Naive thymus-derived CD4-positive, alpha-beta T cell (primary cell): ENCODE measurements at regions of chr22 and their contacts with region 1.

Region 1: GRCh38 chr22:31661851-31662656 is at the start of gene PISD:
- DNase-seq: peak; percentile 93 to 98 (median 97)
- ATAC-seq: peak; percentile 99
- H3K4me3 ChIP-seq: peak within 1 kb of the TSS; percentile 93
- H3K4me3 Mint-ChIP-seq: peak within 1 kb of the TSS; percentile 90 to 100 (median 98)
- H3K27ac ChIP-seq: peak within 1 kb of the TSS; percentile 78
- H3K27ac Mint-ChIP-seq: peak within 1 kb of the TSS; percentile 90 to 100 (median 95)
- H3K4me1 ChIP-seq: peaks cover 10 to 18% of the 10 kb centered on the region in 2 donors
- H3K4me1 Mint-ChIP-seq: peaks cover 22 to 47% (median 39%) of the 10 kb centered on the region in 7 donors
- H3K27me3 ChIP-seq: no peaks in the 10 kb centered on the region
- H3K27me3 Mint-ChIP-seq: no peaks in the 10 kb centered on the region
- total RNA-seq, gene PISD: 29.7 to 47.8 (median 35.5) TPM

Region 2: GRCh38 chr22:31399211-31400028 is 262.6 kb before region 1 on chr22 and contains the start of gene DRG1:
- CTCF ChIA-PET with region 1: no interaction called
- POLR2A ChIA-PET with region 1: interaction called, 10 read pairs
- intact Hi-C with region 1: no loop called
- DNase-seq: peak; percentile 90 to 98 (median 93)
- ATAC-seq: peak; percentile 99
- H3K4me3 ChIP-seq: peak within 1 kb of the TSS; percentile 88
- H3K4me3 Mint-ChIP-seq: peak within 1 kb of the TSS; percentile 92 to 99 (median 96)
- H3K27ac ChIP-seq: peak within 1 kb of the TSS; percentile 91
- H3K27ac Mint-ChIP-seq: peak within 1 kb of the TSS; percentile 85 to 97 (median 94)
- H3K4me1 ChIP-seq: peaks cover 10 to 15% of the 10 kb centered on the region in 2 donors
- H3K4me1 Mint-ChIP-seq: peaks cover 5 to 35% (median 22%) of the 10 kb centered on the region in 7 donors
- H3K27me3 ChIP-seq: no peaks in the 10 kb centered on the region
- H3K27me3 Mint-ChIP-seq: no peaks in the 10 kb centered on the region
- total RNA-seq, gene DRG1: 53.3 to 109 (median 84.4) TPM

Region 3: DNA sequence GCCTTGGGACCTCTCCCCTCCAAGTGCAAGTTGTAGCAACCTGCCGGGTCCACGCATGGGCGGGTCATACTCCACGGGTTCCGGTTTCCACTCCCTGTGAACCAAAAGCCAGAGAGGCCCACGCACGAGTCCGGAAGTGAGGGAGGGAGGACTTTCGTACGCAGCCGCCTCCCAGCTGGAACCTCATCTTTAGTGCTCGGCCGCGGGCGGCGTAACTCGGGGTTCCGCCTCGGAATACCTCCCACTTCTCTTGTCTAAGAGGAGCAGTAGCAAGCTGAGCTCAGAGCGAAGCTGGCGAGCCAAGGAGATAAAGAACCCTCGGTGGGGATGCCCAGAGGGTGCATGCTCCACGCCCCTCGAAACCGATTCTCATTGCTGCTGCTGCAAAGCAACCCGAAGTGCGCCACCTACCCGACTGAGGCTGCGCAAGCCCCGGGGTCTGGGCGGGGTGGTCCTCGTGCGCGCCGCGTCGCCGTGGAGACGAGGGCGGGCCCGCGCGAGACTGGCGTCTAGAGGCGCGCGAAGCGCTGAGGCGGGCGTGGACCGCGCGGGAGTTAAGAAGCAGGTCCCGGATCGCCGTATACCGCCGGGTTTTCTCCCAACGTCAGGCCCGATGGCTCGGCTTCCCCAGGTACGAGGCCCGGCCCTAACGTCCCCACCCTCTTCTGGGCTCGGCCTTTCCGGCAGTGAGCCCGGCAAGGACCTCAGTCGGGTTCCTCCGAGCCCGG is 165.9 kb before region 1 on chr22 and contains the start of gene SFI1:
- CTCF ChIA-PET with region 1: no interaction called
- POLR2A ChIA-PET with region 1: interaction called, 3 read pairs
- intact Hi-C with region 1: loop called in 1 of 2 experiments (anchors 1 kb)
- DNase-seq: peak; percentile 91 to 98 (median 96)
- ATAC-seq: peak; percentile 93
- H3K4me3 ChIP-seq: peak within 1 kb of the TSS; percentile 83
- H3K4me3 Mint-ChIP-seq: peak within 1 kb of the TSS; percentile 85 to 99 (median 96)
- H3K27ac ChIP-seq: peak within 1 kb of the TSS; percentile 92
- H3K27ac Mint-ChIP-seq: peak within 1 kb of the TSS; percentile 92 to 99 (median 98)
- H3K4me1 ChIP-seq: peaks cover 18 to 20% of the 10 kb centered on the region in 2 donors
- H3K4me1 Mint-ChIP-seq: peaks cover 7 to 50% (median 43%) of the 10 kb centered on the region in 7 donors
- H3K27me3 ChIP-seq: no peaks in the 10 kb centered on the region
- H3K27me3 Mint-ChIP-seq: no peaks in the 10 kb centered on the region
- total RNA-seq, gene SFI1: 196 to 359 (median 343) TPM

Region 4: DNA sequence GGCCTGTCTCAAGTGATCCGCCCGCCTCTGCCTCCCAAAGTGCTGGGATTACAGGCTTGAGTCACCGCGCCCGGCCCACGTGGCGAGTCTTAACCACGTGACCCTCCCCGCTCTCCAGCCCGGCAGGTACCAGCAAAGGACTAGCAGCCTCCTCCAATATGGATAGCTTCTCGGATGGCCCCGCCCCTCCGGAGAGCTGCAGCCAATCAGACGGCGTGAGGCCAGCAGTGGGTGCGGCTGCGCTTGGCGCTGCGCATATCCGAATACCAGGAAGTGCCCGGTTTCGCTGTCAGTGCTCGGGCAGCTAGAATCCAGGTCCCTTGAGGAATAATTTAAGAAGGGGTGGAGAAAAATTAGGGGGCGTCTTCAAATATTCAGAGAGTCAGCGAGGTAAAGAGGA is 14.6 kb after region 1 on chr22:
- CTCF ChIA-PET with region 1: interaction called, 11 read pairs
- POLR2A ChIA-PET with region 1: interaction called, 30 read pairs
- intact Hi-C with region 1: loop called (anchors 1 kb)
- DNase-seq: peak; percentile 83 to 90 (median 88)
- ATAC-seq: peak; percentile 100
- H3K4me3 ChIP-seq: peak overlapping the region; percentile 98
- H3K4me3 Mint-ChIP-seq: peak overlapping the region; percentile 85 to 97 (median 94)
- H3K27ac ChIP-seq: peak overlapping the region; percentile 74
- H3K27ac Mint-ChIP-seq: peak overlapping the region; percentile 91 to 100 (median 98)
- H3K4me1 ChIP-seq: no peaks in the 10 kb centered on the region
- H3K4me1 Mint-ChIP-seq: peaks cover 7 to 14% (median 10%) of the 10 kb centered on the region in 7 donors
- H3K27me3 ChIP-seq: no peaks in the 10 kb centered on the region
- H3K27me3 Mint-ChIP-seq: no peaks in the 10 kb centered on the region

Region 5: GRCh38 chr22:31749636-31750364 is 87.7 kb after region 1 on chr22 and contains the start of gene PRR14L:
- CTCF ChIA-PET with region 1: no interaction called
- POLR2A ChIA-PET with region 1: interaction called, 11 read pairs
- intact Hi-C with region 1: loop called (anchors 1 kb)
- DNase-seq: peak; percentile 94 to 100 (median 98)
- ATAC-seq: peak; percentile 86
- H3K4me3 ChIP-seq: peak within 1 kb of the TSS; percentile 92
- H3K4me3 Mint-ChIP-seq: peak within 1 kb of the TSS; percentile 87 to 97 (median 94)
- H3K27ac ChIP-seq: peak within 1 kb of the TSS; percentile 83
- H3K27ac Mint-ChIP-seq: peak within 1 kb of the TSS; percentile 82 to 98 (median 96)
- H3K4me1 ChIP-seq: peaks cover 31 to 37% of the 10 kb centered on the region in 2 donors
- H3K4me1 Mint-ChIP-seq: peaks cover 36 to 65% (median 59%) of the 10 kb centered on the region in 7 donors
- H3K27me3 ChIP-seq: no peaks in the 10 kb centered on the region
- H3K27me3 Mint-ChIP-seq: peaks cover 0 to 2% (median 0%) of the 10 kb centered on the region in 5 donors
- total RNA-seq, gene PRR14L: 43.1 to 82.6 (median 66.9) TPM

Region 6: DNA sequence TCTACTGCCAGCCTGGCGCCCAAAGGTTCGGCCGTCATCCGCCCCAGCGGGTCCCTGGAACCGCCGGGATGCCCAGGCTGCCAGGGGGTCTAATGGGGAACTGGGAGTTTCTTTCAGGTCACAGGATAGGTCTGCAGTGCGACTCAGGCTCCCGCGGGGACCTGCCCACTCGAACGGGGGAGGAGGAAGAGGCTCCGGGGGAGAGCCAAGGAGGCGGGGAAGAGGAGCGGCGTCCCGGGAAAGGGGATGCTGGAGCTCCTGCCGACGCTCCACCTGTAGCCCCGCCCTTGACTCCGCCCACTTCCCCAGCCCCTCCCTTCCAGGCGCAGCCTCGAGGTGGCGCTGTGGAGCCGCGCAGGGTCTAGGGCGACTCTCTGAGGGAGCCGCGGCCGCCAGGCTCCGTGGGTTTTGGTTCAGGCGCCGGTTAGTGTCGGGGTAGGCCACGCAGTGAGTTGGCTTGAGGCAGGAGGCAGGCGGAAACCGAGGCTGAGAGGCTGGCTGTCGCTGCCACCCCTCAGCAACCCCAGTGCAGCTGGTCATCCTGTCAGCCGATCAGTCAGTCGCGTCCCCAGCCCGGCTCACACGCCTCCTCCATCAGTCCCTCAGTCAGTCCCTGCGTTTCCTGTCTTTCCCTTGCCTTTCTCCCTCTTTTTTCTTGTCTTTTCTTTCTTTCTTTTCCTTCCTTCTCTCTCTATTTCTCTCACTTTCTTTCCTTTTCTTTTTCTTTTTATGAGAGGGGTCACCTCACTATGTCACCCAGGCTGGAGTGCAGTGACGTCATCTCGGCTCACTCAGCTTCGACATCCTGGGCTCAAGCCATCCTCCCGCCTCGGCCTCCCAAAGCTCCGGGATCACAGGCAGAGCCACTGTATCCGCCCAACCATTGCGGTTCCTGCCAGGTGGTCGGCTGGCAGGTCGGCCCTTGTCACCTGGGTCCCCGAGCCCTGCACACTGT is 308.7 kb after region 1 on chr22:
- CTCF ChIA-PET with region 1: interaction called, 9 read pairs
- POLR2A ChIA-PET with region 1: no interaction called
- intact Hi-C with region 1: loop called (anchors 1 to 10 kb)
- DNase-seq: peak; percentile 69 to 97 (median 86)
- ATAC-seq: peak; percentile 99
- H3K4me3 ChIP-seq: peak overlapping the region; percentile 70
- H3K4me3 Mint-ChIP-seq: peak overlapping the region; percentile 72 to 87 (median 82)
- H3K27ac ChIP-seq: peak overlapping the region; percentile 37
- H3K27ac Mint-ChIP-seq: peak overlapping the region in 7 of 9 donors; percentile 19 to 75 (median 62)
- H3K4me1 ChIP-seq: peaks cover 8 to 10% of the 10 kb centered on the region in 2 donors
- H3K4me1 Mint-ChIP-seq: peaks cover 9 to 18% (median 13%) of the 10 kb centered on the region in 7 donors
- H3K27me3 ChIP-seq: no peaks in the 10 kb centered on the region
- H3K27me3 Mint-ChIP-seq: peaks cover 0 to 2% (median 0%) of the 10 kb centered on the region in 5 donors

Region 7: DNA sequence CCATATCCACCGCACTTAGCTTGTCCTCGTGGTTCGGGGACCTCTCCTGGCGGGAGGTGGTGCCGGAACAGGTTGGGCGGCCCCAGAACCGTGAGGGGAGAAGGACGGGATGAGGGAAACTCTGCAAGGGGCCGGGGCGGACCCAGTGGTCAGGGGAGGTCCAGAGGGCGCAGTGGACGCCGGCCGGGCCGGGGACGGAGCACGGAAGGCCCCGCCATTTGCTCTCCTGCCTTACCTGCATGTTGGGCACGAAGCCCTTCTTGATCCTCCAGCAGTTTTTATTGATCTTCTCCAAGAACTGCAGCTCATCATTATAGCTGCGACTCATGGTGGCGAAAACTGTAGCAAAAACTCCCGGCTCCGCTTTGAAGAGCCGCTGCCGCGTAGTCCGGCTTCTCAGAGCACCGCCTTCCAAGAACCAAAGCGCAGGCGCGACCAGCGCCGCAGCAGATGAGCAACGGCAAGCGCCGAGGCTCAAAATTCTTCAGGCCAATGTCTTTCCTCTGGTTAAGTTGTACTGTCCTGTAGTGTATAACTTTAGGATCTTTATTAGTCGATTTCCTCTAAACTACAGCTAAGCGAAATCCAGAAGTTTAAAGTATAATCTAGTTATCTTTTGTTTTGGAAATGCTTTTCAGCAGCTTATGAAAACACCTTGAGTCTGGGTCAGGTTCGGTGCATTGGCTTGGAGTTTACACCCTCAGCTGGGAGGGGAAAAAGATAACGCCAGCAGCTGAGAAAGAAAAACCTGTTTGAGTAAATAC is 750.0 kb after region 1 on chr22 and contains the start of gene RTCB:
- CTCF ChIA-PET with region 1: no interaction called
- POLR2A ChIA-PET with region 1: no interaction called
- intact Hi-C with region 1: loop called in 1 of 2 experiments (anchors 10 kb)
- DNase-seq: peak; percentile 86 to 93 (median 90)
- ATAC-seq: peak; percentile 94
- H3K4me3 ChIP-seq: peak within 1 kb of the TSS; percentile 89
- H3K4me3 Mint-ChIP-seq: peak within 1 kb of the TSS; percentile 96 to 99 (median 98)
- H3K27ac ChIP-seq: peak within 1 kb of the TSS; percentile 92
- H3K27ac Mint-ChIP-seq: peak within 1 kb of the TSS; percentile 90 to 98 (median 96)
- H3K4me1 ChIP-seq: peaks cover 12 to 14% of the 10 kb centered on the region in 2 donors
- H3K4me1 Mint-ChIP-seq: peaks cover 22 to 62% (median 58%) of the 10 kb centered on the region in 7 donors
- H3K27me3 ChIP-seq: no peaks in the 10 kb centered on the region
- H3K27me3 Mint-ChIP-seq: peaks cover 0 to 11% (median 0%) of the 10 kb centered on the region in 5 donors
- total RNA-seq, gene RTCB: 41.6 to 59.7 (median 54.6) TPM